Right ventricle myocardium superior (tissue), 1 donor: ENCODE measurements at regions of chr13 and their contacts with region 1.

Region 1: DNA sequence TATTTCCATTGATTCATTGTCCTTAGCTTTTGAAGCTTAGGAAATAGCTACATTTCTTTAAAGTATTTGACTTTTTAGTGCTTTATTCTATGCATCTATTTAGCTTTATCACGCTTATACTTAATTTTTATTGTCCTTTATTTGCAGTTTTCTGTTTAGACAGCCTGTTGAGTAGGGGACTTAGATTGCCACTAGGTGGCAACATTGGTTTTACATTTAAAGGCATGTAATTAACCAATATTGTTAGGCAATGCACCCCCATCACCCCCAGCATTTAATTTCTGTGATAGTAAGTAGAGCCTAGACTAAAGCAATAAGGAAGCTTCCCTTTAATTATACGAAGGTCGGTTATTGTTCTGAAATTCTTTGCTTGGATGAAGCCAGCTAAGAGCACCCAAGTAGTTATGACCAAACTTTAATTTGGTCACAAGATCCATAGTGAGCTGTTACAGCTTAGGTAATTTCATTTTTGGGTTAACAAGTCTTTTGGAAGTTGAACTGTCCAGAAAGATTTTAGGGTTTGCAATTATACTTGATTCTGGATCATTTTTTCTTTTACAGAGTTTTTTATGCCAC is 36.5 kb downstream of the B3GLCT start:
- DNase-seq: no peak
- ATAC-seq: peak; percentile 65

Region 2: DNA sequence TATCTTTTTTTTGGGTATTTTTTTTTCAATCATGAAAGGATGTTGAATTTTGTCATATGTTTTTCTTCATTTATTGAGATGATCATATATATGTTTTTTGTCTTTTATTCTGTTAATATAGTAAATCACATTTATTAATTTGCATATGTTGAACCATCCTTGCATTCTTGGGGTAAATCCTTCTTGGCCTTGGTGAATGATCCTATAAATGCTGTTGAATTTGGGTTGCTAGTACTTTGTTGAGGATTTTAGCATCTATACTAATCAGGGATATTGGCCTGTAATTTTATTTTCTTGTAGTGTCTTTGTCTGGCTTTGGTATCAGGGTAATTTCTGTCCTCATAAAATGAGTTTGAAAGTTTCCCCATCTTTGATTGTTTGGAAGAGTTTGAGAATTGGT is 163.4 kb after region 1 on chr13:
- intact Hi-C with region 1: no loop called
- DNase-seq: no peak
- ATAC-seq: no peak

Region 3: DNA sequence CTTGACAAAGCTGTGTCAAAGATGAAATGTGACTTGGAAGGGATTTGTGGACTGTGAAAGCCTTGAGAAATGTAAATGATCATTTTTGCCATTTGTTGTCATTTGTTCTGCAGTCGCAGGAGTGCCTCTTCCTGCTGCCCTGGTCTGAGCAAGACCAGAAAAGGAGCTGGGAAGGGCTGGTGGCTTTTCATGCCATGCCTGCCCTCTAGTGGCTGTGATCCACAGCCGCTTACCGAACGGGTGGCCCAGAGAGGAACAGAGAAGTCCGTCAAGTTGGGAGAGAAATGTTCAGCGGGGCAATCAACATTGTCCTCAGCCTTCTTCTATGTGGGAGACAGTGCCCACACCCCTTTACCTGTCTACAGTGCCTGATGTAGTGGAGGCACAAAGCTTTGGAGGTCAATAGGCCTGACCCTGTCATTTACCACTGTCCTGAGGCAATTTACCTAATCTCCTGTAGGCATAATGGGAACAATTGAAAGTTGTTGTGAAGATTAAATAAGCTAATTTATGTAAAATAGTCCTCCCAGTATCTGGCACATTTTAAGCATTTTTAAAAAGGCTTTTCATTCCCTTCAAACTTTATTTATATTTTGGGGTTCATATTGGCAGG is 187.9 kb after region 1 on chr13:
- intact Hi-C with region 1: loop called (anchors 2 kb)
- DNase-seq: peak; percentile 79
- ATAC-seq: peak; percentile 98

Region 4: DNA sequence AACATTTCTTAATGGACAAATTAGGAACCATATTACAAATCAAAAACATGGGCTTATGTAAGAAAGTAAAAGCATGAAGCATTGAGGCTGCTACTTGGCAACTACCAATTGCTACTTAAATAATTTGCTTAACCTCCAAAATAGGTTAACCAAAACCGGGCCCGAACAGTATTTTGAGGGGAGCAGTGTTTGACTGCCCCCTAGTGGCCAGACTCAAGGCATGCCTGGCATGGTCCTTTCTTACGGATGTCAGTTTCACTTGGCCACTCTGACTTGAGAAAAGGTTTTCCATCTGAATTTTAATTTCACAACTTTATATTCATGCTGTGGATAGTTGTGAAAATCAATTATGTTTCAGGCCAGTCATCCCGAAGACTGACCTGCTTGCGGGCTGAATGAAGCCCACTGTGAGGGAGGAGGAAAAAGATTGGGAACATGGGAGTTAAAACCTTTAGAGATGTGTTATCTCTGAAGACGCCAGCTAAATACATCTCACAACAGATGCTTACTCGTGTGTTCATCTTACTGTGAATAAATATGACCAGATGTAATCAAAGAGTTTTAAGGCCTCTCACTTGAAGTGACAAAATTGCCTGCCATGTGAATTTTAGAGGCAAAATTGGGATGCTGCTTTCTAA is 505.9 kb after region 1 on chr13:
- intact Hi-C with region 1: loop called (anchors 10 kb)
- DNase-seq: peak; percentile 65
- ATAC-seq: peak; percentile 95